ENCODE measurements at regions of chr5 and their contacts with region 1.

Region 1: GRCh38 chr5:65506961-65507360 is 25.2 kb upstream of the ADAMTS6 start:
- DNase-seq: peak; percentile 82
- H3K4me3 ChIP-seq: peak overlapping the region; percentile 7
- H3K27ac ChIP-seq: peak overlapping the region; percentile 85
- H3K4me1 ChIP-seq: peaks cover 11% of the 10 kb centered on the region
- H3K27me3 ChIP-seq: no peaks in the 10 kb centered on the region
- CTCF ChIP-seq: no peak

Region 2: GRCh38 chr5:65489119-65489518 is 17.8 kb before region 1 on chr5:
- CTCF ChIA-PET with region 1: no interaction called
- POLR2A ChIA-PET with region 1: interaction called, 10 read pairs
- intact Hi-C with region 1: no loop called
- DNase-seq: no peak
- H3K4me3 ChIP-seq: no peak overlapping the region
- H3K27ac ChIP-seq: no peak overlapping the region
- H3K4me1 ChIP-seq: no peaks in the 10 kb centered on the region
- H3K27me3 ChIP-seq: no peaks in the 10 kb centered on the region
- CTCF ChIP-seq: no peak

Region 3: DNA sequence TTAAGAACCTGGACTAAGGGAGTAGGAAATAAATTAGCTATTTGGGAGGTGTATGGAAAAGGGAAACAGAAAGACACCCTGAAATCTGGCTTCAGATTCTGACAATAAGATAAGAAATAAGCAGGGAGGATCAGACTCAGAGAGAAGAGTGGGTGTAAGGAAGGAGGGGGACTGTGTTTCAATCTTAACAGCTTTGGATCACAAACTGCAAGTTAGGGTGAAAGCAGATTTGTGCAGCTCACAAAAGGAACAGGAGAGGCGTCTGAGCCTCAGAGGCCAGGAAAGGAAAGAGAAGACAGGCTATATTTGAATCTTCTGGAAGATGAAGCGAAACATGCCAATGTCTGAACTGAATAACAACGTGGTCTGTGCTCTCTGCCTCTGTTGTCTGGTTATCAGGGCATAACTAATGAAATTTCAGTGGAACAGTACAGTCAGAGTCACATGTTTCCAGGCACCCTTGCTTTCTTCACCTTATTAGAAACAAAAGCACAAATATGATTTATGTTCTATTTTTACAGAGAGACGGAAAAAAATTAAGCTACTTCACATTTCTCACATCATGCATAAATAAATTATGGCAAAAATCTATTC is 188.3 kb after region 1 on chr5:
- CTCF ChIA-PET with region 1: no interaction called
- POLR2A ChIA-PET with region 1: no interaction called
- intact Hi-C with region 1: no loop called
- DNase-seq: no peak
- H3K4me3 ChIP-seq: no peak overlapping the region
- H3K27ac ChIP-seq: no peak overlapping the region
- H3K4me1 ChIP-seq: no peaks in the 10 kb centered on the region
- H3K27me3 ChIP-seq: no peaks in the 10 kb centered on the region
- CTCF ChIP-seq: no peak